ENCODE measurements at regions of chr11 and their contacts with region 1.

Region 1: GRCh38 chr11:37946155-37946766 is 1348.2 kb upstream of the RAG2 start:
- DNase-seq: no peak
- ATAC-seq: no peak
- H3K4me3 ChIP-seq: no peak overlapping the region
- H3K27ac ChIP-seq: no peak overlapping the region
- H3K4me1 ChIP-seq: no peaks in the 10 kb centered on the region
- H3K27me3 ChIP-seq: no peaks in the 10 kb centered on the region

Region 2: DNA sequence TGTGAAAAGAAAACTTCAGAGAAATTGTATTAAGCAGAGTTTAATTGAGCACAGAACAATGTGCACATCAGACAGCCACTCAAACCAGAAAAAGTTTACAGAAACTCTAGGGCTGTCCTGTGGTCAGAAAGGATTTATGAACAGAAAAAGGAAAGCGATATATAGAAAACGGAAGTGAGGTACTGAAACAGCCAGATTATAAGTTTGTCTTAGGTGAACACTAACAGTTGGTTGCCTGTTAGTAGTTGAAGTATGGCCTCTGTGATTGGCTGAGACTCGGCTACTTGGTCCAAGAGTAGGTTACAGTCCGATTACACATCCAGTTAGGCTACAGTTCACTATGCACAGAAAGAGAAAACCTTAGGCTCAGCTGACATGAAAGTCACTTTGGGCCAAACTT is 115.7 kb before region 1 on chr11:
- intact Hi-C with region 1: no loop called
- DNase-seq: no peak
- ATAC-seq: no peak
- H3K4me3 ChIP-seq: no peak overlapping the region
- H3K27ac ChIP-seq: no peak overlapping the region
- H3K4me1 ChIP-seq: no peaks in the 10 kb centered on the region
- H3K27me3 ChIP-seq: no peaks in the 10 kb centered on the region

Region 3: DNA sequence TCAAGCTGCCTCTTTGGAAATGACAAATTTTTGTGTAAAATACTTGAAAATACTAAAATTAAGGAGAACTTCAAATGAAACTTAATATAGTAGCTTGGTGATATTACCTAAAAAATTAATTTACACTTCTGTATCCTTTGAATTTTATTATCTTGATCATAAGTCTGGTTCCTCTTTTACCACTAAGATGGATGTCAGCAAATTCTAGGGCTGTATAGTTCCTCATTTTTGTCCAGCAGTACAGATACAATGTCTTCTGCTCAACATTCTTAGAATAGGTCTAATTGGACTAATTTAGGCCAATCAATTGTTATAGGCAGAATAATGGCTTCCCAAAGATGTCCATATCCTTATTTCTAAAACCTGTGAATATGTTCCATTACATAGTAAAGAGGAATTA is 50.2 kb before region 1 on chr11:
- intact Hi-C with region 1: no loop called
- DNase-seq: no peak
- ATAC-seq: no peak
- H3K4me3 ChIP-seq: no peak overlapping the region
- H3K27ac ChIP-seq: no peak overlapping the region
- H3K4me1 ChIP-seq: no peaks in the 10 kb centered on the region
- H3K27me3 ChIP-seq: no peaks in the 10 kb centered on the region

Region 4: GRCh38 chr11:37916331-37916730 is 29.9 kb before region 1 on chr11:
- intact Hi-C with region 1: no loop called
- DNase-seq: no peak
- ATAC-seq: no peak
- H3K4me3 ChIP-seq: no peak overlapping the region
- H3K27ac ChIP-seq: no peak overlapping the region
- H3K4me1 ChIP-seq: no peaks in the 10 kb centered on the region
- H3K27me3 ChIP-seq: no peaks in the 10 kb centered on the region

Region 5: GRCh38 chr11:37978647-37979046 is 32.4 kb after region 1 on chr11:
- intact Hi-C with region 1: no loop called
- DNase-seq: no peak
- ATAC-seq: no peak
- H3K4me3 ChIP-seq: no peak overlapping the region
- H3K27ac ChIP-seq: no peak overlapping the region
- H3K4me1 ChIP-seq: peaks cover 2% of the 10 kb centered on the region
- H3K27me3 ChIP-seq: no peaks in the 10 kb centered on the region

Region 6: GRCh38 chr11:39374963-39375698 is 1428.9 kb after region 1 on chr11:
- intact Hi-C with region 1: loop called in 1 of 4 experiments (anchors 10 kb)
- DNase-seq: no peak
- ATAC-seq: no peak
- H3K4me3 ChIP-seq: no peak overlapping the region
- H3K27ac ChIP-seq: no peak overlapping the region
- H3K4me1 ChIP-seq: no peaks in the 10 kb centered on the region
- H3K27me3 ChIP-seq: no peaks in the 10 kb centered on the region